CD4-positive, alpha-beta T cell (primary cell): ENCODE measurements at regions of chr2 and their contacts with region 1.

Region 1: DNA sequence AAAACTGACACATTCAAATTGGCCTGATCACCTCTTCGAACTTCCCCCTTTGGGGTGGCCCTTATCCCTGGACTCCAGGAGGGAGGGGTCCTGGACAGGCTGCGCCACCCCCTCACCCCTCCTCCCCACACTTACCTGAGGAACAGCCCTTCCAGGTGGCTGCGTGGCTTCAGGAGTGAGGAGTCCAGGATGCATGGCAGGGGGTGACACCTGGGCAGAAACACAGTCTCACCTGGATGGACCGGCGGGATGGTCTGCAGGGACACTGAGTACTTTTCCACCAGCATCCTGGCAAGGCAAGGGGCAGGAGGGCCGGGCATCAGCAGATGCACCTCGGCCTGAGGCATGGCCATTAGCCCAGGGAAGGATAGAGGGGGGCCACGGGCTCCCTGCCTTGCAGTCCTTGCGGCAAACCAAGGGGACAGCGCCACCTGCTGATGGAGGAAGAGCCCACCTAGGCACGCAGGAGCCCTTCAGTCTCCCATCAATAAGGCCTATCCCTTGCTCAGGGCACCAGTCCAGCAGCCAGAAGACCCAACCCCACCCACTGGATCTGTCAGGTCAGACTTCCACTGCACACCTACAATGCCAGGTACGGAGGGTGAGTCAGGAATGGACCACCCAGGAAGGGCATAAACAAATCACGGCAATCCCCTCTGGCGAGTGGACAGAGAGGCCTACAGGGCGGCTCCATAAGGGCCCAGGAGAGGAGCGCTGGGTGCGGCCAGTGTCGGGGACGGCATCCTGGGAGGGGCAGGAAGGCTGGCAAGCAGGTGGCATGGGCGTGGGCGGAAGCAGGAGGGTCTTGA is 26.0 kb downstream of the FAM178B start:
- DNase-seq: peak; percentile 75 to 93 (median 84)
- ATAC-seq: no peak
- H3K4me3 ChIP-seq: no peak overlapping the region
- H3K4me3 Mint-ChIP-seq: peak overlapping the region; percentile 71
- H3K27ac ChIP-seq: no peak overlapping the region
- H3K27ac Mint-ChIP-seq: peak overlapping the region; percentile 93
- H3K4me1 ChIP-seq: peaks cover 56% of the 10 kb centered on the region
- H3K4me1 Mint-ChIP-seq: peaks cover 56% of the 10 kb centered on the region
- H3K27me3 ChIP-seq: no peaks in the 10 kb centered on the region
- H3K27me3 Mint-ChIP-seq: no peaks in the 10 kb centered on the region
- CTCF ChIP-seq: peak; percentile 96

Region 2: GRCh38 chr2:96638144-96639121 is 321.9 kb before region 1 on chr2 and contains the start of gene KANSL3:
- CTCF ChIA-PET with region 1: no interaction called
- POLR2A ChIA-PET with region 1: interaction called, 9 read pairs
- intact Hi-C with region 1: loop called (anchors 5 kb)
- DNase-seq: peak; percentile 79 to 95 (median 84)
- ATAC-seq: peak; percentile 85
- H3K4me3 ChIP-seq: peak within 1 kb of the TSS; percentile 98
- H3K4me3 Mint-ChIP-seq: peak within 1 kb of the TSS; percentile 99
- H3K27ac ChIP-seq: peak within 1 kb of the TSS; percentile 69 to 75
- H3K27ac Mint-ChIP-seq: peak within 1 kb of the TSS; percentile 96
- H3K4me1 ChIP-seq: peaks cover 29% of the 10 kb centered on the region
- H3K4me1 Mint-ChIP-seq: peaks cover 45% of the 10 kb centered on the region
- H3K27me3 ChIP-seq: no peaks in the 10 kb centered on the region
- H3K27me3 Mint-ChIP-seq: no peaks in the 10 kb centered on the region
- CTCF ChIP-seq: no peak
- total RNA-seq, gene KANSL3: 54.4 to 61.8 TPM

Region 3: GRCh38 chr2:96730212-96730611 is 230.1 kb before region 1 on chr2:
- CTCF ChIA-PET with region 1: no interaction called
- POLR2A ChIA-PET with region 1: no interaction called
- intact Hi-C with region 1: no loop called
- DNase-seq: no peak
- ATAC-seq: no peak
- H3K4me3 ChIP-seq: no peak overlapping the region
- H3K4me3 Mint-ChIP-seq: no peak overlapping the region
- H3K27ac ChIP-seq: no peak overlapping the region
- H3K27ac Mint-ChIP-seq: no peak overlapping the region
- H3K4me1 ChIP-seq: no peaks in the 10 kb centered on the region
- H3K4me1 Mint-ChIP-seq: peaks cover 9% of the 10 kb centered on the region
- H3K27me3 ChIP-seq: no peaks in the 10 kb centered on the region
- H3K27me3 Mint-ChIP-seq: no peaks in the 10 kb centered on the region
- CTCF ChIP-seq: no peak

Region 4: DNA sequence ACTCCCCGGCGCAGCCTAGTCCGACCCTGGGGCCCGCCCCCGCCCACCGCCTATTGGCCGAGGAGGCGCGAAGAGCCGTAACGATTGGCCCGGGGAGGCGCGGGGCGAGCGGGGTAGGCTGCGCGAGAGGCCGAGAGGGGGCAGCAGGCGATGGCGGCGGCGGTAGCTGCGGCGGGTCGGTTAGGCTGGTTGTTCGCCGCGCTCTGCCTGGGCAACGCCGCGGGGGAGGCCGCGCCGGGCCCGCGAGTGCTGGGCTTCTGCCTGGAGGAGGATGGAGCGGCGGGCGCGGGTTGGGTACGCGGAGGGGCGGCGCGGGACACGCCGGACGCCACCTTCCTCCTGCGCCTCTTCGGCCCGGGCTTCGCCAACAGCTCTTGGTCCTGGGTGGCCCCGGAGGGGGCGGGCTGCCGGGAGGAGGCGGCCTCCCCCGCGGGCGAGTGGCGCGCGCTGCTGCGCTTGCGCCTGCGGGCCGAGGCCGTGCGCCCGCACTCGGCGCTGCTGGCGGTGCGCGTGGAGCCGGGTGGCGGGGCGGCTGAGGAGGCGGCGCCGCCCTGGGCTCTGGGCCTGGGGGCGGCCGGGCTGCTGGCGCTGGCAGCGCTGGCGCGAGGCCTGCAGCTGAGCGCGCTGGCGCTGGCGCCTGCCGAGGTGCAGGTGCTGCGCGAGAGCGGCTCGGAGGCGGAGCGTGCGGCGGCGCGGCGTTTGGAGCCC is 144.1 kb before region 1 on chr2 and contains the start of gene CNNM3:
- CTCF ChIA-PET with region 1: interaction called, 9 read pairs
- POLR2A ChIA-PET with region 1: interaction called, 22 read pairs
- intact Hi-C with region 1: loop called (anchors 2 kb)
- DNase-seq: peak; percentile 90 to 98 (median 96)
- ATAC-seq: peak; percentile 91
- H3K4me3 ChIP-seq: peak within 1 kb of the TSS; percentile 77
- H3K4me3 Mint-ChIP-seq: peak within 1 kb of the TSS; percentile 94
- H3K27ac ChIP-seq: peak within 1 kb of the TSS; percentile 52 to 60
- H3K27ac Mint-ChIP-seq: peak within 1 kb of the TSS; percentile 88
- H3K4me1 ChIP-seq: peaks cover 49% of the 10 kb centered on the region
- H3K4me1 Mint-ChIP-seq: peaks cover 62% of the 10 kb centered on the region
- H3K27me3 ChIP-seq: no peaks in the 10 kb centered on the region
- H3K27me3 Mint-ChIP-seq: no peaks in the 10 kb centered on the region
- CTCF ChIP-seq: peak; percentile 65
- total RNA-seq, gene CNNM3: 48.7 to 53.5 TPM

Region 5: DNA sequence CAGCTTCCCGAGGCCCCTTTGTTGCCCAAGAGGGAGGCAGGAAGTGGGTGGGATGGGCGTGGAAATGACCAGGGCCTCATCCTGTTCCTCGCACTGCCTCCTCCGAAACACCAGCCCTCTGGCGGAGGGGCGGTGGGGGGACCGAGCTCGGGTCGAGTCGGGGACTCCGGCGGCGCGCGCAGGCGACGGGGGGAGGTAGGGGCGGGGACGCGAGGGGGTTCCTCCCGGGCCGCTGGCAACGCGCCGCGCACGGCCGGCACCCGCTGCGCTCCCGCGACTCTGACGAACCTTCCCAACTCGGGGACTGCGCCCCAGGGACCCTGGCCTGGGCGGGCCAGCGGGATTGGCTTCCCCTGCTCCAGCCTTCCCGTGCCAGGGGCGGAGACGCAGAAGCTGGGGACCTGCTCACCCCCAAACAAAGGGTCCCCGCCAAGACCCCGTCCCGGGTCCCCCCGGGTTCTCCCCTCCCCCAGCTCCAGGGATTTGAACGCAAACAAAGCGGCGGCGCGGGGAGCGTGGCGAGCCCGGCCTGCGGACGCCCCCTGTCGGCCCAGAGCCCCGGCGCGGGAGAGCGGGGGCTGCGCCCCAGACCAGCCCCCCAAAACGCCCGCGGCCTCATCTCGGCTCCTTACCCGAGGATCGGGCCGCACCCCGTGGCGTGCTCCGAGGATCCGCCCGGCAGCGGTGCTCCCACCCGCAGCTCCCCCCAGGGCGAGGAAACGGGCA is 91.6 kb before region 1 on chr2:
- CTCF ChIA-PET with region 1: interaction called, 6 read pairs
- POLR2A ChIA-PET with region 1: interaction called, 23 read pairs
- intact Hi-C with region 1: loop called in 1 of 2 experiments (anchors 5 kb)
- DNase-seq: peak; percentile 25 to 78 (median 55)
- ATAC-seq: peak; percentile 24
- H3K4me3 ChIP-seq: peak overlapping the region; percentile 80
- H3K4me3 Mint-ChIP-seq: peak overlapping the region; percentile 92
- H3K27ac ChIP-seq: peak overlapping the region; percentile 66 to 69
- H3K27ac Mint-ChIP-seq: peak overlapping the region; percentile 85
- H3K4me1 ChIP-seq: peaks cover 55% of the 10 kb centered on the region
- H3K4me1 Mint-ChIP-seq: peaks cover 49% of the 10 kb centered on the region
- H3K27me3 ChIP-seq: no peaks in the 10 kb centered on the region
- H3K27me3 Mint-ChIP-seq: no peaks in the 10 kb centered on the region
- CTCF ChIP-seq: peak; percentile 72

Region 6: DNA sequence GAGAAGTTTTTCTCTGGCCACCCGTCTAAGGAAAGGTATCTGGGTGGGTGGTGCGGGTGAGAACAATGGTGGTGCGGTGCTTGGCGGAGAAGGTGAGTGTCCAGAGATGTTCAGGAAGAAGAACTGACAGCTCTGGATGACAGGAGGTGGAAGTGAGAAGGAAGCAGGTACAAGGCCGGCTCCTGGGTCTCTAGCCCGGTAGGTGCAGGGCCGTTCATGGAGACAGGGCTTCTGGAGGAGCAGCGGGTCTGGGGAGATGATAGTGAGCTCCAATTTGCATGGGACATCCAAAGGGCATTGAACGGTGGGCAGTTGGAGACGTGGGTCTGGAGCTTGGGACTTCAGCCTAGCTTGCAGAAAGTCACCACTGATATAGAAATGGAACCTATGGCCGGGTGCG is 135.3 kb after region 1 on chr2:
- CTCF ChIA-PET with region 1: no interaction called
- POLR2A ChIA-PET with region 1: no interaction called
- intact Hi-C with region 1: loop called in 1 of 2 experiments (anchors 5 kb)
- DNase-seq: no peak
- ATAC-seq: no peak
- H3K4me3 ChIP-seq: no peak overlapping the region
- H3K4me3 Mint-ChIP-seq: peak overlapping the region; percentile 27
- H3K27ac ChIP-seq: no peak overlapping the region
- H3K27ac Mint-ChIP-seq: peak overlapping the region; percentile 62
- H3K4me1 ChIP-seq: peaks cover 17% of the 10 kb centered on the region
- H3K4me1 Mint-ChIP-seq: peaks cover 8% of the 10 kb centered on the region
- H3K27me3 ChIP-seq: peaks cover 0 to under 1% of the 10 kb centered on the region in 2 experiments
- H3K27me3 Mint-ChIP-seq: peaks cover 10% of the 10 kb centered on the region
- CTCF ChIP-seq: no peak

Region 7: GRCh38 chr2:98608116-98608999 is 1648.0 kb after region 1 on chr2 and contains the starts of genes COA5 and UNC50:
- CTCF ChIA-PET with region 1: no interaction called
- POLR2A ChIA-PET with region 1: no interaction called
- intact Hi-C with region 1: no loop called
- DNase-seq: peak; percentile 84 to 95 (median 89)
- ATAC-seq: peak; percentile 83
- H3K4me3 ChIP-seq: peak within 1 kb of the TSS; percentile 77
- H3K4me3 Mint-ChIP-seq: peak within 1 kb of the TSS; percentile 85
- H3K27ac ChIP-seq: peak within 1 kb of the TSS; percentile 87 to 91
- H3K27ac Mint-ChIP-seq: peak within 1 kb of the TSS; percentile 89
- H3K4me1 ChIP-seq: peaks cover 43% of the 10 kb centered on the region
- H3K4me1 Mint-ChIP-seq: peaks cover 72% of the 10 kb centered on the region
- H3K27me3 ChIP-seq: no peaks in the 10 kb centered on the region
- H3K27me3 Mint-ChIP-seq: no peaks in the 10 kb centered on the region
- CTCF ChIP-seq: no peak
- total RNA-seq, gene COA5: 29.2 to 30.1 TPM
- total RNA-seq, gene UNC50: 17.1 to 17.5 TPM